PC-3 (cell line): ENCODE measurements at regions of chr6 and their contacts with region 1.

Region 1: DNA sequence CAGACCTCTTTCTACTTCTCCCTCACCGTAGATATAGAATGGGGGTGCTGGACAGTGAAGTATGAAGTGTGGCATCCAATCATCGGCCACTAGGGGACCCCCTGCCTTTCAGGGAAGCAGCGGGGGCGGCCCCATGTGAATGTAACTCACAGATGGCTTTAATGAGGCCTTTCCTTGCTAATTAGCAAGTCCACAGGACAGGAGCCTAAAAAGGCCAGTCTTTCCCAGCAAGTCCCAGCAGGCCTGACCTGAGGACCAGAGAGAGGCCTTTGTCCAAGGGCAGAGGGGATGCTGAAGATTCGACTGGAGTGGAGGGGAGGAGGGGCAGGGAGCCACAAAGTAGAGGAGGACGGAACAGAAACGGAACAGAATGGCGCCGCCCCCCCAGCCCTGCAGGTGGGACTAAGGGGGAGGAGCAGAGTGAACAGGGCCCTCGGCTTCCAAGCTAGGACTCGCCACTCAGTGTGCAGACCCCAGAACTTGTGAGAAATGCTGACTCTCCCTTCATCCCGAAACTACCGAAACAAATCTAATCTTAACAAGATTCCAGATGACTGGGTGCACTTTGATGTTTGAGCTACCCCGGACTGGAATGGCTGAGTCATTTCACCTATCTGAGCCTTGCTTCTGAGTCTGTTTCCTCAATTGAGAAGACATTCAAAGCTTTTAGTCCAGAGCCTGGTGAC is 5.8 kb downstream of the C6orf132 start:
- DNase-seq: peak; percentile 85
- ATAC-seq: peak; percentile 36
- H3K4me3 ChIP-seq: peak overlapping the region; percentile 51
- H3K27ac ChIP-seq: peak overlapping the region; percentile 91
- H3K4me1 ChIP-seq: peaks cover 59% of the 10 kb centered on the region
- H3K27me3 ChIP-seq: no peaks in the 10 kb centered on the region
- CTCF ChIP-seq: no peak; the same call in 1 of the 2 replicates

Region 2: DNA sequence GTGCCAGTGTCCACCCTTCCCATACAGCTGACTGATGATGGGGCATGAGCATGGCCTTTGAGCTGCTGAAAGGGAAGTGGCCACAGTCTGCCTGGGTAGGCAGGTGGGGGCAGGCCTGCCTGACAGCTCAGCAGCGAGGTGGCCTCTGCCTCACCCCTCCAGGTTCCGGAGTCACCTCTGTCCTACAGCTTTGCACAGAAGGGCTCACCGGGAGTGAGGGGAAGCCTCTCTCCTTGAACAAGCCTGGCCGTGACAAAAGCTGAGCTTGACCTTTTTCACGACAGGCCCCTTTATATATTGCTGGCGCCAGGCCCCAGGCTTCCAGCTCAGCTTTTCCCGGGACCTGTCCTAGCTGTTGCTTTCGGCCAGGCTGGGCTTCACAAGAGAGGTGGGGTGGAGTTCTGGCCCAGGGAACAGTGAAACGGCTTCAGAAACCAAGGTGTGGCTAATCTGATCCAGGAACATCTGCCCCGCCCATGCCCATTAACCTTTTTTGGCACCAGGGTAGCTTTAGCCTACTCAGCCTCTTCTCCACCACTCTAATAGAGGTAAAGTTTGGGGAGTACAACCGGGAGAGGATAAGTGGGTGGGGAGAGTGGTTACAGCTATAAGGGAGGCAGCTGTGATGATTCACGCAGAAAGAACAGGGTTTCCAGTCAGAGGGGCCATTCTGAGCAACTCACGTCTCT is 37.2 kb before region 1 on chr6:
- CTCF ChIA-PET with region 1: interaction called, 5 read pairs
- POLR2A ChIA-PET with region 1: interaction called, 4 read pairs
- intact Hi-C with region 1: loop called (anchors 5 kb)
- DNase-seq: peak; percentile 78
- ATAC-seq: peak; percentile 78
- H3K4me3 ChIP-seq: peak overlapping the region; percentile 18; the same call in 1 of the 2 replicates
- H3K27ac ChIP-seq: peak overlapping the region; percentile 94
- H3K4me1 ChIP-seq: peaks cover 31% of the 10 kb centered on the region
- H3K27me3 ChIP-seq: no peaks in the 10 kb centered on the region
- CTCF ChIP-seq: no peak